ENCODE measurements at regions of chr9 and their contacts with region 1.

Region 1: DNA sequence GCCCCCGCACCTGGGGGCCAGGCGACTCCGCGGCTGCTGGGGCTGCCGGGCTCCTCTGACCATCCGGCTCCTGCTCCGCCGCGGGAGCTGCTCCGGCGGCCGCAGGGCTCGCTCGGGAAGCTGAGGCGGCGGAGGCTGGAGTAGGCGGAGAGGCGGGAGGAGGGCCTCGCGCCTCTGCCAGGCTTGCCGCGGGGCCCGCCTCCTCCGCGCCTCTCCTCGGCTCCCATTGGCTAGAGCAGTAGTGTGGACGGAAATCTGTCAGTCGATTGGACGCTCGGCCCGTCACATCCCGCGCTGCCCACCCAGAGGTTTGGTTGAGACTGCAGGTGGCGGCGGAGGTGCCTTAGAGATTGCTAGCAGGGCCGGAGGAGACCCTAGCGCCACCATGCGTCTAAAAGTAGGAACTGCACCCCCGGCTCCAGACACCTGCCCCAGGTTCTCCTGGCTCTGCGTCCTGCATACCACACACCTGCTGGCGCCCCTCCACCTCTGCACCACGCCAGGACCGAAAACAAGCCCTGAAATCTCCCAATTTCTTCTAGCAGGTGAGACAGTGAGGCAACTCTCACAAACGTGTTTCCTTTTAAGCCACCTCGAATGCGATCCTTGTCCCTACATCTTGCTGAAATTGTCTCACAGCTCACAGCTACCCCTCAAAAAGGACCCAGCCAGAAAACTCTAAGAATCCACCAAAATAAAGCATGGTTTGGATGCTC is at the start of gene SCAI:
- DNase-seq: peak; percentile 100
- ATAC-seq: peak; percentile 99
- H3K4me3 Mint-ChIP-seq: peak within 1 kb of the TSS; percentile 83
- H3K27ac Mint-ChIP-seq: peak within 1 kb of the TSS; percentile 74
- H3K4me1 Mint-ChIP-seq: peaks cover 24% of the 10 kb centered on the region
- H3K27me3 Mint-ChIP-seq: no peaks in the 10 kb centered on the region
- CTCF ChIP-seq: peak; percentile 95
- total RNA-seq, gene SCAI: 9.6 to 10.8 TPM

Region 2: DNA sequence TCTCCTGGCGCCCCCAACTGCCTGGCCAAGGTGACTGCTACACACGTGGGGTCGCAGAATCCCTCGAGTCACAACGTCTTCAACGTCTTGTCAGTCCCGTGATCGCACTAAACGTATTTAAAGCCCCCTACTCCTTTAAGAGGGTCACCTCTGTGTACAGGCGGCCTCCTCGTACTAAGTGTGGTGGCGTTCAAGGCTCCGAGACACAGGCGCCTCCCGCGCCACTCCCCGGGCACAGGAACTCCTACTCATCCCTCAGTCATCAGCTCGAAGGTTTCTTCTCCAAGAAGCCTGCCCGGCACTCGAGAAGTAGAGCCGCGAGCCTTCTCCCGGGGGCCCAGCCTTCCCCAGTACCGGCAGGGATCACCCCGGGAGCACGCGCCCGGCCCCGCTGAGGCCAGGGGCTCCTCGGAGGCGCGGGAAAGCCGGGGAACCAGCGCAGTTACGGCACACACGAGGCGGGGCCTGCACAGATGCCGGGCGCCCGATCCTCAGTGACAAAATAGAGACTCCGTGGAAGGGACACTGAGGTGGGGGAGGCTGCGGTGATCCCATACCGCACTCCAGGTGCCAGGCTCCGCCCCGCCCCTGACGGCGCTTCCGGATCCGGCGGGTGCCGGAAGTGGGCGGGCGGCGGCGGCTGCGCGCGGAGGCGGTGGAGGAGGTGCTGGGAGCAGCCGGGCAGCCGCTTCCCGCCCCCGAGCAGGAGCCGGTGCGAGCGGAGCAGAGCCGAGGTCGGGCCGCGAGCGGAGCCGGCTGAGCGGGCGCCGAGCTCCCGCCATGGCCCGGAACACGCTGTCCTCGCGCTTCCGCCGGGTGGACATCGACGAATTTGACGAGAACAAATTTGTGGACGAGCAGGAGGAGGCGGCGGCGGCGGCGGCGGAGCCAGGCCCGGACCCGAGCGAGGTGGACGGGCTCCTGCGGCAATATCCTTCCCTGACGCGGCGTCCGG is 274.7 kb before region 1 on chr9:
- CTCF ChIA-PET with region 1: no interaction called
- POLR2A ChIA-PET with region 1: no interaction called
- intact Hi-C with region 1: loop called (anchors 10 kb)
- DNase-seq: peak; percentile 92
- ATAC-seq: peak; percentile 54
- H3K4me3 Mint-ChIP-seq: peak overlapping the region; percentile 94
- H3K27ac Mint-ChIP-seq: peak overlapping the region; percentile 99
- H3K4me1 Mint-ChIP-seq: peaks cover 47% of the 10 kb centered on the region
- H3K27me3 Mint-ChIP-seq: no peaks in the 10 kb centered on the region
- CTCF ChIP-seq: peak; percentile 20

Region 3: DNA sequence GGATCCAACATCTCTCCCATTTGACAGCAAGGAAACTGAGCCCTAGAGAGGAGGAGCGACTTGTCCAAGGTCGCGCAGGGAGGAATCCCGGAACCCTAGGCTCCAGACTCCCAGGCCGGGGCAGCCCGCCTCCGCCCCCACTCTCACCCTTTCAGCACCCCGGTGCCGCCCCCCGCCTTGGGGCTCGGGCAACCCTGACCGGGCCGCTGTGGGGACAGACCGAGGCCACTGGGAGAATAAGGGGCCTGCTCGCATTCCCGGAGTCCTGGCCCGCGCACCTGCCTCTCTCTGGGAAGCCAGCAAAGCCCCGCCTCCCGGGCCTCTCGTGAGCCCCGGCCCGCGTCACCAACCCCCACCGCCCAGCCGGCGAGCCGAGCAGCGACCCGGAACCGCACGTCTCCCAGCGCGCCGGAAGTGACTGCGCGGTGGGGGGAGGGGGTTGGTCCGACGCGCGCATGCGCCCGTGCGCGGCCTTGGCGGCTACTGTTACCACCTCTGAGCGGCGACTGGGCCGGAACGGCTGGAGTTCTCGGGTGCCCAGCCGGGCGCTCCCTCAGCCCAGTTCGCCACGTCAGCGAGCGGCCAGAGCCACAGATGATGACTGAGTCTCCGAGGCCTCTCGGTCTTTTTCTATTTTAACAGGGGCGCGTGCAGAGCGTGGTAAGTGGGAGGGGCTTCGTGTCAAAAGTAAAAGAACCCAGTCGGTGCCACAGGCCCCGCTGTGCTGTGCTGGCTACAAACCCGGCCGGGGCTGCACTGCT is 202.7 kb before region 1 on chr9 and contains the start of gene GOLGA1:
- CTCF ChIA-PET with region 1: interaction called, 3 read pairs
- POLR2A ChIA-PET with region 1: no interaction called
- intact Hi-C with region 1: loop called (anchors 10 kb)
- DNase-seq: peak; percentile 93
- ATAC-seq: peak; percentile 90
- H3K4me3 Mint-ChIP-seq: peak within 1 kb of the TSS; percentile 81
- H3K27ac Mint-ChIP-seq: peak within 1 kb of the TSS; percentile 96
- H3K4me1 Mint-ChIP-seq: peaks cover 21% of the 10 kb centered on the region
- H3K27me3 Mint-ChIP-seq: no peaks in the 10 kb centered on the region
- CTCF ChIP-seq: no peak
- total RNA-seq, gene GOLGA1: 20.9 to 21.6 TPM

Region 4: GRCh38 chr9:125126019-125126746 is 17.4 kb before region 1 on chr9:
- CTCF ChIA-PET with region 1: interaction called, 21 read pairs
- POLR2A ChIA-PET with region 1: interaction called, 14 read pairs
- intact Hi-C with region 1: no loop called
- DNase-seq: peak; percentile 92
- ATAC-seq: peak; percentile 96
- H3K4me3 Mint-ChIP-seq: peak overlapping the region; percentile 37
- H3K27ac Mint-ChIP-seq: peak overlapping the region; percentile 95
- H3K4me1 Mint-ChIP-seq: peaks cover 26% of the 10 kb centered on the region
- H3K27me3 Mint-ChIP-seq: no peaks in the 10 kb centered on the region
- CTCF ChIP-seq: no peak